ENCODE measurements at regions of chr5 and their contacts with region 1.

Region 1: DNA sequence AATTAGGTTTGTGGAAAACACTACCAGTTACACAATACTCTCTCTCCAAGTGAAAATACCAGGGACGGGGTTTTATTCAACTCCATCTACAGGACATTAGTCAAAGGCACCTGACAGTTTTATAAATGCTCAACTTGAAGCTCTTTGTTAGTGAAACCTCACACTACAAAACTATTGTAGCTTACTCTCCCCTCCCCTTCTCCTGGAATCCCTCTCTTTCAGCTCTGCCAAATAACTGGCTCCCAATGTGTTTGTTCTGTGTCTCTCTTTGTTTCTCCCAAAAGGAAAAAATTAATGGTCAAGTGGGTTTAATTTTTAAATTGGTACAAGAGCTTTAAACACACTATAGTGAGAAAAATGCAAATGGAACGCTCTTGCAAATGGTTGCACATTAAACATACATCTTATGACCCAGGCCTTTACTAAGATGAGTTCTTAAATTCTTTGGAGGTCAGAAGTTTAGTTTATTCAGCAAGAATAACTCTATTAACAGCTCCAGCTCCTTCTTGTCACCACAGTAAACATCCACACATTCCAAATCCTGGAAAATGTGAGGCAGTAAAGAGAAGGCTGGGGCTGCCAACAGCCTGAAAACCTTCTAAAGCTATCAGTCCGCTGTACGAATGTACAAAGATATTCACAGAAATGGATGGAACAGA is 48.4 kb downstream of the ZNF608 start:
- DNase-seq: no peak
- ATAC-seq: no peak
- H3K4me3 ChIP-seq: no peak overlapping the region
- H3K4me3 Mint-ChIP-seq: no peak overlapping the region
- H3K27ac ChIP-seq: no peak overlapping the region
- H3K27ac Mint-ChIP-seq: no peak overlapping the region
- H3K4me1 ChIP-seq: peaks cover 15 to 19% of the 10 kb centered on the region in 2 donors
- H3K4me1 Mint-ChIP-seq: peaks cover 42% of the 10 kb centered on the region
- H3K27me3 ChIP-seq: peaks cover 0 to 6% (median 0%) of the 10 kb centered on the region in 4 experiments
- H3K27me3 Mint-ChIP-seq: no peaks in the 10 kb centered on the region
- CTCF ChIP-seq: no peak

Region 2: GRCh38 chr5:124574521-124575436 is 123.3 kb before region 1 on chr5:
- CTCF ChIA-PET with region 1: no interaction called
- POLR2A ChIA-PET with region 1: interaction called, 10 read pairs
- intact Hi-C with region 1: no loop called
- DNase-seq: no peak
- ATAC-seq: no peak
- H3K4me3 ChIP-seq: no peak overlapping the region
- H3K4me3 Mint-ChIP-seq: no peak overlapping the region
- H3K27ac ChIP-seq: no peak overlapping the region
- H3K27ac Mint-ChIP-seq: no peak overlapping the region
- H3K4me1 ChIP-seq: peaks cover 7 to 11% of the 10 kb centered on the region in 2 donors
- H3K4me1 Mint-ChIP-seq: peaks cover 24% of the 10 kb centered on the region
- H3K27me3 ChIP-seq: no peaks in the 10 kb centered on the region
- H3K27me3 Mint-ChIP-seq: no peaks in the 10 kb centered on the region
- CTCF ChIP-seq: no peak